Stomach (tissue), 19 donors: ENCODE measurements at regions of chr3 and their contacts with region 1.

Region 1: DNA sequence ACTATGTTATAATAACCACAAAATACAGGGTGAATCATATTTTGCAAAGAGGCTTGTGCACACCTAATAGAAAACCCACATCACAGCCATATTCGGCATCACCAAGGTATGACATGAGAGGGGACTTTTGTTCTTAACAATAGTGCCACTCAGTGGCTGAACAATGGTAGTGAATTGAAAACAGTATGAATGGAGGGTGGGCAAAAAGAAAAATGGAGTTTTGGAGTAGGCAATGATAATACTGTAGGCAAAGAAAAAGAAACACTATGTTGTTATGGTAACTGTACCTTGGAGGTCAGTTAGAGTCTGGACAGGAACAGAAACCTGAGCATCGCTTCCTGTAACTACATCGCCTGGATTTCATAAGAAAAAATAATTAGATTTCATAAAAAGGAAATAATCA is 348.6 kb downstream of the PLCL2 start:
- DNase-seq: peak in 1 of 2 donors; percentile 75
- H3K4me3 ChIP-seq: no peak overlapping the region
- H3K27ac ChIP-seq: no peak overlapping the region
- H3K4me1 ChIP-seq: peaks cover 0 to 23% (median 11%) of the 10 kb centered on the region in 4 donors
- H3K27me3 ChIP-seq: no peaks in the 10 kb centered on the region
- CTCF ChIP-seq: peak in 5 of 7 experiments; percentile 28 to 66 (median 56)
- EP300 ChIP-seq: no peak
- POLR2A ChIP-seq: no peak

Region 2: GRCh38 chr3:16600780-16601539 is 632.4 kb before region 1 on chr3:
- intact Hi-C with region 1: loop called (anchors 10 kb)
- DNase-seq: peak; percentile 89 to 93
- H3K4me3 ChIP-seq: no peak overlapping the region
- H3K27ac ChIP-seq: no peak overlapping the region
- H3K4me1 ChIP-seq: peaks cover 0 to 7% (median 0%) of the 10 kb centered on the region in 4 donors
- H3K27me3 ChIP-seq: peaks cover 0 to 5% (median 0%) of the 10 kb centered on the region in 3 donors
- CTCF ChIP-seq: peak in 5 of 7 experiments; percentile 66 to 87 (median 70)
- EP300 ChIP-seq: no peak
- POLR2A ChIP-seq: no peak

Region 3: DNA sequence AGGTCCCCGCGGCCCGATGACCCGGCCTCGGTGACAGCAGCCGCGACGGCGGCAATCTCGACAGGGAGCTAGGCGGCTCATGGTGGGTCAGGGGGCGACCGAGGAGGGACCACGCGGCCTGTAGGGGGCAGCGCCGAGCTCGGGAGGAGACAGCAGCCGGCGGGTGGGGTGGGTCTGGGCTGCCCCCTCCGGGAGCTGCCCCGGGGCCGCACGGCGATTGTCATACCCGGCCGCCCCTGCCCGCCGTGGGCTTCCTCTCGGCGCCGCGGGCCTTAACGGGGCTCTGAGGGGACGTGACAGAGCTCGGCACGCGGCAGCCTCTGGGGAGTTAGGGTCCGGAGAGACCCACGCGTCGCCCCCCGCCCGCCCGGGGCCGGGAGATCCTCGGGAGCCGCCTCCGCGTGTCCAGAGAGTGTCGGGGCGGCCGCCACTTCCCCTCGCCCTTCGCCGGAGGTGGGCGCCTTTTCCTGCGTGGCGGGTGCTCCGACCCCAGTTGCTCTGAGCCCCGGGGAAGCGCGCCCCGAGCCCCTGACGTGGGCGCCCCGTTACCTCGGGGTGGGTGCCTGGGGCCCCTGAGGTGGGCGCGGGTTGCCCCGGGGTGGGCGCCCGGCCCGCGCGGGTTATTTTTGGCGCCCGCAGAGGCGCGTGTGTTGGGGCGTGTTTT is 349.2 kb before region 1 on chr3:
- intact Hi-C with region 1: no loop called
- DNase-seq: peak; percentile 58 to 92
- H3K4me3 ChIP-seq: peak overlapping the region; percentile 67 to 90 (median 80)
- H3K27ac ChIP-seq: peak overlapping the region; percentile 76 to 94 (median 92)
- H3K4me1 ChIP-seq: peaks cover 7 to 53% (median 30%) of the 10 kb centered on the region in 4 donors
- H3K27me3 ChIP-seq: no peaks in the 10 kb centered on the region
- CTCF ChIP-seq: peak in 5 of 7 experiments; percentile 13 to 74 (median 49)
- EP300 ChIP-seq: no peak
- POLR2A ChIP-seq: no peak